ENCODE measurements at regions of chr5 and their contacts with region 1.

Region 1: GRCh38 chr5:67246108-67246507 is 49.5 kb upstream of the CD180 start:
- DNase-seq: peak; percentile 88
- H3K4me3 Mint-ChIP-seq: no peak overlapping the region
- H3K27ac Mint-ChIP-seq: no peak overlapping the region
- H3K4me1 Mint-ChIP-seq: no peaks in the 10 kb centered on the region
- H3K27me3 Mint-ChIP-seq: no peaks in the 10 kb centered on the region
- CTCF ChIP-seq: peak; percentile 54

Region 2: DNA sequence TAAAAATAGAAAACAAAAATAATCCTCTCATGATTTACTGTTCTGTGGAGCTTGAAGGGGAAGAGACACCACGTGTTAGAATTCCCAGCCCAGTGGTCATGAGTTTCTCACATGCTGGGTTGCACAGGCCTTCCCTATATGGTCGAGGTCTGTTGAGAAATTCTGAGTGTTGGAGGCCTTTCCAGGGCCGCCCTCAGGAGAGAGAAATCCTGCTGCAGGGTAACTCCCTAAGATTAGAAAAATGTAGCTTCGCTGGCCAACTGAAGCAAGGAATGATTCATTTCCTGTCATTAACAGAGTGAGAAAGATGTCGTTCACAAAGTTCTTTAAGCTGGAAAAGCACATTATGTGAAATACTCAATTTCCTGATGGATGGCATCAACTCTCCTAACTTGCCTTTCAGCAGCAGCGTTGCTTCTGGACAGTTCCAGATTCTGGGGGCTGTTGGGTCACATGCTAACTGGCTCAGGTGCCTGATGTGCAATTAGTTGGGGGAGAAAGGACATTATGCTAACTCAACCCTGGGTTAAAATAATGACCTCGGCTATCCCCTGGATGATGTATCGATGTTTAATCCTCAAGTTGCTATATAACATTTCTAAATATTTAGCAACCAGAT is 55.3 kb after region 1 on chr5:
- CTCF ChIA-PET with region 1: interaction called, 6 read pairs
- POLR2A ChIA-PET with region 1: interaction called, 31 read pairs
- intact Hi-C with region 1: loop called (anchors 1 kb)
- DNase-seq: peak; percentile 99
- H3K4me3 Mint-ChIP-seq: no peak overlapping the region
- H3K27ac Mint-ChIP-seq: peak overlapping the region; percentile 97
- H3K4me1 Mint-ChIP-seq: peaks cover 56% of the 10 kb centered on the region
- H3K27me3 Mint-ChIP-seq: no peaks in the 10 kb centered on the region
- CTCF ChIP-seq: no peak

Region 3: DNA sequence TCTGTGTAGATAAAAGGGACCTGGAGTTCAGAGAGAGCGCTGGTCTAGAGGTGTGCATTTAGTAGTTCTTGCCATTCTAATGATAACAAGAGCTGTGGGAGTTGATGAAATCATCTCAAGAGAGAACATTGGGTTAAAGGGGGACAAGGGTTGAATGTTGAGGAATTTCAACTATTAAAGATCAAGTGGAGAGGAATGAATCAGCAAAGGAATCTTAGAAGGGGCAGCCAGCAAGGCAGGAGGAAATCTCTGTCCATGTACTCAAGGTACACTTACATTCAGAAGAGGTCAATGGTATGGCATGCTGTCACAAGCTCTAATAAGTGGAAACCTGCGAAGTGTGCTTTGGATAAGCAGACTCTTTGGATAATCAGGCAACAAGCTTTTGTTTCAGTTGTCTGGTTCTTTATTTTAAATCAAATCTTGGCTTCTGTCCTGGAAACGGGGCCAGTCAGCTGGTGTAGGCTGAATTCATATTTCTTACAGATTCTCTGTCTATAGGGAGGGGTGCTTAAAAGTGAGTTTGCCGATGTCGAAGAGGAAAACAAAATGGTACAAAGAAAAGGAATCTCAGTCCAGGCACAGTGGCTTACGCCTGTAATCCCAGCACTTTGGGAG is 270.9 kb after region 1 on chr5:
- CTCF ChIA-PET with region 1: interaction called, 3 read pairs
- POLR2A ChIA-PET with region 1: no interaction called
- intact Hi-C with region 1: loop called (anchors 10 kb)
- DNase-seq: no peak
- H3K4me3 Mint-ChIP-seq: no peak overlapping the region
- H3K27ac Mint-ChIP-seq: peak overlapping the region; percentile 1
- H3K4me1 Mint-ChIP-seq: peaks cover 11% of the 10 kb centered on the region
- H3K27me3 Mint-ChIP-seq: no peaks in the 10 kb centered on the region
- CTCF ChIP-seq: no peak

Region 4: DNA sequence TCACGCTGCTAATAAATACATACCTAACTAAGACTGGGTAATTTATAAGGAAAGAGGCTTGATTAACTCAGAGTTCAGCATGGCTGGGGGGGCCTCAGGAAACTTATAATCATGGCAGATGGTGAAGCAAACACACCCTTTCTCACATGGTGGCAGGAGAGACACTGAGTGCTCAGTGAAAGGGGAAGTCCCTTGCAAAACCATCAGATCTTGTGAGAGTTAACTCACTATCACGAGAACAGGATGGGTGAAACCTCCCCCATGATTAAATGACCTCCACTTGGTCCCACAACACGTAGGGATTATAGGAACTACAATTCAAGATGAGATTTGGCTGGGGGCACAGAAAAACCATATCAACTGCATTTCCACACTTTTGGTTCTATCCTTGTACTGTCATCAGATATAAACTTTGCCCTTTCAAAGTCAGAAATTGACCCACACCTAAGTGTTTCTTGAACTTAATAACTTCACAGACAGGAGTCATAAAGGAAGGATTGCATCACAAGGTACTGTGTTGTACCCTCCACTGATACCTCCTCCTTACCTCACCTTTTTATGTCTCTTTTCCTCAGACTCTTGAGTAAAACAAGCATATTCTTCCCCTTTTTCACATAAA is 650.3 kb after region 1 on chr5:
- CTCF ChIA-PET with region 1: no interaction called
- POLR2A ChIA-PET with region 1: interaction called, 32 read pairs
- intact Hi-C with region 1: no loop called
- DNase-seq: peak; percentile 27
- H3K4me3 Mint-ChIP-seq: no peak overlapping the region
- H3K27ac Mint-ChIP-seq: peak overlapping the region; percentile 82
- H3K4me1 Mint-ChIP-seq: peaks cover 39% of the 10 kb centered on the region
- H3K27me3 Mint-ChIP-seq: no peaks in the 10 kb centered on the region
- CTCF ChIP-seq: no peak

Region 5: GRCh38 chr5:68272289-68272688 is 1026.2 kb after region 1 on chr5:
- CTCF ChIA-PET with region 1: interaction called, 9 read pairs
- POLR2A ChIA-PET with region 1: interaction called, 5 read pairs
- intact Hi-C with region 1: loop called (anchors 1 kb)
- DNase-seq: no peak
- H3K4me3 Mint-ChIP-seq: no peak overlapping the region
- H3K27ac Mint-ChIP-seq: no peak overlapping the region
- H3K4me1 Mint-ChIP-seq: peaks cover 73% of the 10 kb centered on the region
- H3K27me3 Mint-ChIP-seq: no peaks in the 10 kb centered on the region
- CTCF ChIP-seq: peak; percentile 35